ENCODE measurements at regions of chr14 and their contacts with region 1.

Region 1: DNA sequence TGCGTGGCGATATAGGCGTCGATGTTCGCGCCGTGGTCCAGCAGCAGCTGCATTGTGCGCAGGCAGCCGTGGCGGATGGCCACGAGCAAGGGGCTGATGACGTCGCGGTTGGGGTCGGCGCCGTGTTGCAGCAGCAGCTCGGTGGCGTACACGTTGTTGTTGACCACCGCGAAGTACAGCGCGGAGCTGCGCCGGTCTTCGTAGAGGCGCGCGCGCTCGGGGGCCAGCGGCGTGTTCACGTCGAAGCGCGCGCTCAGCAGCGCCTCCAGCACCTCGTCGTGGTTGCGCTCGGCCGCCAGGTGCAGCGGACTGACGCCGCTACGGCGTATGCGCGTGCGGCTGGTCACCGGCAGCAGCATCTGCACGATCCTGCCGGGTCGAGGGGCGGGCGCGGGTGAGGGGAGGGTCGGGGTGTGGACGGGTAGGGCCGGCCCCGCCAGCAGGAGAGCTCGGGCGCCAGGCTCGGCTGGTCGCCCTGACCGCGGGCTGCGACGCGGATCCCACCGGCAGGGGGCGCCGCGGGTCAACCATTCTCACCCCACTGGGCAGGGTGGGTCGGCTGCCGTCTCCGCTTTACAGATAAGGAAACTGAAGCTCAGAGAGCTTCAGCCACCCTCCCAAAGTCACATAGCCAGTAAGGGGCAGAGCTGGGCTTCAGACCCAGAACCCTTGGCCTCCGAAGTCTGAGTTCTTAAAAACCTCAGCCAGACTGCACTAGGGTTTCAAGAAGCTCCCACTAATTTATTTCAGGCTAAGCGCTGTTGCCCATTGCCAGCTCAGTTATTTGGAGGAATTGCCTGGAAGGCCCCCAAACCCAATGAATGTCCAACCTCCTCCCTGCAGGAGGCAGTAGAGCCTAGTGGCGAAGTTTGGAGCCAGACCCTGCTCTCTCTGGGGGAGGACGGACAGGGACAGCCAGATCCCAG is 12.4 kb downstream of the FAM181A start:
- DNase-seq: peak; percentile 18 to 73 (median 49)
- H3K4me3 ChIP-seq: peak overlapping the region; percentile 20
- H3K27ac ChIP-seq: no peak overlapping the region
- H3K4me1 ChIP-seq: no peaks in the 10 kb centered on the region
- H3K27me3 ChIP-seq: no peaks in the 10 kb centered on the region
- CTCF ChIP-seq: peak in 2 of 3 donors; percentile 26 to 32
- EP300 ChIP-seq: no peak
- POLR2A ChIP-seq: no peak

Region 2: GRCh38 chr14:94001501-94002396 is 62.2 kb after region 1 on chr14:
- intact Hi-C with region 1: loop called in 1 of 4 experiments (anchors 2 kb)
- DNase-seq: peak; percentile 30 to 57 (median 50)
- H3K4me3 ChIP-seq: no peak overlapping the region
- H3K27ac ChIP-seq: no peak overlapping the region
- H3K4me1 ChIP-seq: no peaks in the 10 kb centered on the region
- H3K27me3 ChIP-seq: no peaks in the 10 kb centered on the region
- CTCF ChIP-seq: peak; percentile 66 to 91 (median 73)
- EP300 ChIP-seq: no peak
- POLR2A ChIP-seq: no peak